Activated CD4-positive, alpha-beta T cell treated with anti-CD3 and anti-CD28 coated beads, Interleukin-2, amount 10 ng/mL, durations not matched to agents 24 days and 14 days (primary cell): ENCODE measurements at regions of chr7 and their contacts with region 1.

Region 1: GRCh38 chr7:50197549-50197948 is 104.5 kb upstream of the ZPBP start:
- DNase-seq: no peak
- H3K4me3 Mint-ChIP-seq: peak overlapping the region; percentile 40
- H3K27ac Mint-ChIP-seq: peak overlapping the region; percentile 88
- H3K4me1 Mint-ChIP-seq: peaks cover 26% of the 10 kb centered on the region
- H3K27me3 Mint-ChIP-seq: peaks cover 21% of the 10 kb centered on the region

Region 2: DNA sequence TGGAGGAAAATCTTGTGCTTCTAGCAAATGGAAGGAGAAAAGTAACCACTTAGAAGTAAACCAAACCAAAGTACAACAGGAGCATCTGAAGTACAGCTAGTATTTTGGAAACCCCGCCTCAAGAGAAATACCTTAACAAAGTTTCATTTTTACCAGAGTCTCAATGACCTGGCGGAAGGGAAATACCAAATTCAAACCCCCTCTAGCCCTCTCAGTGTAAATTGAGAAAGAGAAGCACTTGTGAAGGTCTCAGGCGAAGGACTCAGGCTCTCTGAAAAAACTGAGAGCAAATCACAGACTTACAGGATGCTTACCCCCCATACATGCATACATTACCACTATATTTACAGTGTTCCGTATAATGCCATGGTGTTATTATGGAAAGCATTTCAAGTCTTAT is 174.6 kb before region 1 on chr7:
- intact Hi-C with region 1: no loop called
- DNase-seq: no peak
- H3K4me3 Mint-ChIP-seq: no peak overlapping the region
- H3K27ac Mint-ChIP-seq: no peak overlapping the region
- H3K4me1 Mint-ChIP-seq: no peaks in the 10 kb centered on the region
- H3K27me3 Mint-ChIP-seq: peaks cover 12% of the 10 kb centered on the region

Region 3: GRCh38 chr7:50142425-50143017 is 55.0 kb before region 1 on chr7:
- intact Hi-C with region 1: loop called (anchors 2 kb)
- DNase-seq: peak; percentile 82
- H3K4me3 Mint-ChIP-seq: peak overlapping the region; percentile 57
- H3K27ac Mint-ChIP-seq: peak overlapping the region; percentile 67
- H3K4me1 Mint-ChIP-seq: peaks cover 31% of the 10 kb centered on the region
- H3K27me3 Mint-ChIP-seq: peaks cover 14% of the 10 kb centered on the region

Region 4: DNA sequence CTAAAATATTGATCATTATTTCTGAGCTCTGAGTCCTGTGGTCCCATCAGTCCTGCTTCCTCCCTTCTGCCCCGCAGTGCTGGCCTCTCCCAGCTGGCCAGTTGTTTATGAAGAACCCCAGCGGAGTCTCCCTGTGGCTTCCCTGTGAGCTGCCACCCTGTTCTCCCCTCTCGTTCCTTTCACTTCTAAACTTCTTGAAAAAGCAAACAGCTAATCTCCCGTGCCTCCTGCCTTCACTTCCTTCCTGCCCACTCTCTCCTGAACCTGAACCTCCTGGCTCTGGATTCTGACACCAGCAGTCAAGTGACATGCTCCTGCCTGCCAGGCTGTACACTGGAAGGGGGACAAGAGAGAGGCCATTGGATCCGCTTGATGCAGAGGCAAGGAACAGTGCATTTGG is 40.8 kb before region 1 on chr7:
- intact Hi-C with region 1: loop called (anchors 2 kb)
- DNase-seq: peak; percentile 65
- H3K4me3 Mint-ChIP-seq: peak overlapping the region; percentile 50
- H3K27ac Mint-ChIP-seq: peak overlapping the region; percentile 85
- H3K4me1 Mint-ChIP-seq: peaks cover 31% of the 10 kb centered on the region
- H3K27me3 Mint-ChIP-seq: no peaks in the 10 kb centered on the region

Region 5: GRCh38 chr7:50182759-50183158 is 14.8 kb before region 1 on chr7:
- intact Hi-C with region 1: loop called (anchors 1 kb)
- DNase-seq: no peak
- H3K4me3 Mint-ChIP-seq: no peak overlapping the region
- H3K27ac Mint-ChIP-seq: no peak overlapping the region
- H3K4me1 Mint-ChIP-seq: peaks cover 4% of the 10 kb centered on the region
- H3K27me3 Mint-ChIP-seq: peaks cover 17% of the 10 kb centered on the region

Region 6: GRCh38 chr7:50502001-50502684 is 304.6 kb after region 1 on chr7:
- intact Hi-C with region 1: no loop called
- DNase-seq: no peak
- H3K4me3 Mint-ChIP-seq: no peak overlapping the region
- H3K27ac Mint-ChIP-seq: no peak overlapping the region
- H3K4me1 Mint-ChIP-seq: no peaks in the 10 kb centered on the region
- H3K27me3 Mint-ChIP-seq: peaks cover 12% of the 10 kb centered on the region

Region 7: GRCh38 chr7:51123322-51124029 is 925.9 kb after region 1 on chr7:
- intact Hi-C with region 1: loop called (anchors 2 kb)
- DNase-seq: peak; percentile 81
- H3K4me3 Mint-ChIP-seq: no peak overlapping the region
- H3K27ac Mint-ChIP-seq: peak overlapping the region; percentile 78
- H3K4me1 Mint-ChIP-seq: peaks cover 27% of the 10 kb centered on the region
- H3K27me3 Mint-ChIP-seq: no peaks in the 10 kb centered on the region

Region 8: DNA sequence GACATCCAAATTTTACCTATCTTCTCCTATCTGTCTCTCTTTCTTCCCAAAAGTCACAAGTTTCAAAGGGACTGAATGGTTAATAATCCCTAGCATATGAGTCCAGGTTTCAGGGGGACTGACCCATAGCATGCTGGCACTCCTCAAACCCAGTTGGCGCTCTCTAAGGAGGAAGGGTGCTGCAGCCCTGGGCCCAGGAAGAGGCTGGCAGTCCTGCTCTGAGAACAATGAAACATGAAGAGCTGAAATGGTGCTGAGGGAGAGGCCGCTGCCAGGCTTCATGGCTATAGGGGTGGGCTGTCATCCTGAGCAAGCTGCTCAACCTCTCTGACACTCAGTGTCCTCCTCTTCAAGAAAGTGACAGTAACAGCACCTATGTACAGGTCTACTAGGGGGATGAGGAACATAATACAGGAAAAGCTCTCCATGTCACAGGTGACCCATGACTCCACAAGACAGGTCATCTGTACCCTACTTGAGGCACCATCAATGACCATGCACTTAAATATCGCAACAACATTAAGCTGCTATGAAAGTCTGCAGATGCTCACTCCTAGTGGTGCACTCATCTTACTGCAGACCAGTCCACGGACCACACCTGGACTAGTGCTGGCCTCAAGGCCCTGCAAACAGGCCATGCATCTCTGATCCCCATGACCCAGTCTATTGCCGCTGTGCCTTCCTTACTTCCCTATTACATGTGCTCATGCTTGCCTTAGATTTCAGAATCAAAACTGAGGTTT is 1102.0 kb after region 1 on chr7:
- intact Hi-C with region 1: no loop called
- DNase-seq: no peak
- H3K4me3 Mint-ChIP-seq: no peak overlapping the region
- H3K27ac Mint-ChIP-seq: no peak overlapping the region
- H3K4me1 Mint-ChIP-seq: no peaks in the 10 kb centered on the region
- H3K27me3 Mint-ChIP-seq: no peaks in the 10 kb centered on the region